ENCODE measurements at regions of chr5 and their contacts with region 1.

Region 1: DNA sequence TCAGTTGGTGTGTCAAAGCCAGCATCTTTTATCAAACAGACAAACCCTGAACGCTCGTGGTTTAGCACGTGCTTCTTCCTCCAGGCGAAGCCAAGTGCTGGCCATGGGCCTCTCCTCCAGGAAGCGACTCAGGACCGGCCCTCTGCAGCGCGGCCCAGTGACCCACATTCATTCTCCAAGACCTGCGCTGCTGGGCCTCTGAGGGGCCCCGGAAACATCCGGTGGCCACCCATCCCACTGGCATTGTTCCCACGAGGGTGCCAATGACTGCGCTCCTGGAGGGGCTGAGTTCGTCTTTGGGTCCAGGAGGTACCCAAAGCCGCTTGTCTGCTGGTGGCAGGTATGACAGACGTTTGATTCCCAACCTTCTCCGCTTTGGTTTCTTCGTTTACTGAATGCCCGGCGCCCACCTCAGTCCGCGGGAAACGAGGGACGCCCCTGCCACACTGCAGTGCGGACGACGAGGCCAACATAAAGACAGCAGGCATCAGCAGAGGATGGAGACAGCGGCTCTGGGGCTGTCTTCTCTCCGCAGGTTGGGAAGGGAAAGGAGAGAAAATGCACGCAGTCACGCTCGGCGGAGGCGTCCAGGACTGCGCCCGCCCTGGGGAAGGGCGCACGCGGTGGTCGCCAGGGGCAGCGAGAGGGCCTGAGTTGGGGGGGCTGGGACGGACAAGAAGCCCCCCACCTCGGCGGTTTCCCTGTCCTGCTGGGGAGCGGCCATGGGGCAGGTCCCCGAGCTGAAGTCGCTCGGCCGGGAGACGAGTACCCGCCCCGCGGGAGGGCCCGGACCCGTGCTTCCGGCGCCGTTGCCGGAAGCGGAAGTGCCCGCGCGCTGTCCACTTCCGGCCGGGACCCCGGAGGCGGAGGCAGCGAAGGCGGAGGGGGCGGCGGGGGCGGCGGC is at the start of gene EXOC3:
- DNase-seq: peak; percentile 47 to 89 (median 70)
- ATAC-seq: peak; percentile 77
- H3K4me3 ChIP-seq: peak within 1 kb of the TSS; percentile 98
- H3K4me3 Mint-ChIP-seq: peak within 1 kb of the TSS; percentile 96
- H3K27ac ChIP-seq: peak within 1 kb of the TSS; percentile 70 to 79
- H3K27ac Mint-ChIP-seq: peak within 1 kb of the TSS; percentile 93
- H3K4me1 ChIP-seq: peaks cover 28% of the 10 kb centered on the region
- H3K4me1 Mint-ChIP-seq: peaks cover 37% of the 10 kb centered on the region
- H3K27me3 ChIP-seq: no peaks in the 10 kb centered on the region
- H3K27me3 Mint-ChIP-seq: no peaks in the 10 kb centered on the region
- CTCF ChIP-seq: no peak
- total RNA-seq, gene EXOC3: 82.4 to 84.1 TPM

Region 2: GRCh38 chr5:217860-218456 is 224.6 kb before region 1 on chr5 and contains the starts of genes CCDC127 and SDHA:
- CTCF ChIA-PET with region 1: no interaction called
- POLR2A ChIA-PET with region 1: no interaction called
- intact Hi-C with region 1: loop called in 1 of 2 experiments (anchors 10 kb)
- DNase-seq: peak; percentile 95 to 100 (median 98)
- ATAC-seq: peak; percentile 81
- H3K4me3 ChIP-seq: peak within 1 kb of the TSS; percentile 93
- H3K4me3 Mint-ChIP-seq: peak within 1 kb of the TSS; percentile 99
- H3K27ac ChIP-seq: peak within 1 kb of the TSS; percentile 57 to 80
- H3K27ac Mint-ChIP-seq: peak within 1 kb of the TSS; percentile 96
- H3K4me1 ChIP-seq: peaks cover 46% of the 10 kb centered on the region
- H3K4me1 Mint-ChIP-seq: peaks cover 68% of the 10 kb centered on the region
- H3K27me3 ChIP-seq: no peaks in the 10 kb centered on the region
- H3K27me3 Mint-ChIP-seq: no peaks in the 10 kb centered on the region
- CTCF ChIP-seq: peak; percentile 30
- total RNA-seq, gene CCDC127: 1.9 to 2.8 TPM
- total RNA-seq, gene SDHA: 244 to 245 TPM

Region 3: GRCh38 chr5:270340-270739 is 172.2 kb before region 1 on chr5:
- CTCF ChIA-PET with region 1: no interaction called
- POLR2A ChIA-PET with region 1: interaction called, 3 read pairs
- intact Hi-C with region 1: loop called in 1 of 2 experiments (anchors 5 kb)
- DNase-seq: peak in 1 of 14 experiments; percentile 32
- ATAC-seq: no peak
- H3K4me3 ChIP-seq: peak overlapping the region; percentile 78
- H3K4me3 Mint-ChIP-seq: peak overlapping the region; percentile 82
- H3K27ac ChIP-seq: no peak overlapping the region
- H3K27ac Mint-ChIP-seq: peak overlapping the region; percentile 87
- H3K4me1 ChIP-seq: peaks cover 22% of the 10 kb centered on the region
- H3K4me1 Mint-ChIP-seq: peaks cover 37% of the 10 kb centered on the region
- H3K27me3 ChIP-seq: no peaks in the 10 kb centered on the region
- H3K27me3 Mint-ChIP-seq: no peaks in the 10 kb centered on the region
- CTCF ChIP-seq: no peak

Region 4: DNA sequence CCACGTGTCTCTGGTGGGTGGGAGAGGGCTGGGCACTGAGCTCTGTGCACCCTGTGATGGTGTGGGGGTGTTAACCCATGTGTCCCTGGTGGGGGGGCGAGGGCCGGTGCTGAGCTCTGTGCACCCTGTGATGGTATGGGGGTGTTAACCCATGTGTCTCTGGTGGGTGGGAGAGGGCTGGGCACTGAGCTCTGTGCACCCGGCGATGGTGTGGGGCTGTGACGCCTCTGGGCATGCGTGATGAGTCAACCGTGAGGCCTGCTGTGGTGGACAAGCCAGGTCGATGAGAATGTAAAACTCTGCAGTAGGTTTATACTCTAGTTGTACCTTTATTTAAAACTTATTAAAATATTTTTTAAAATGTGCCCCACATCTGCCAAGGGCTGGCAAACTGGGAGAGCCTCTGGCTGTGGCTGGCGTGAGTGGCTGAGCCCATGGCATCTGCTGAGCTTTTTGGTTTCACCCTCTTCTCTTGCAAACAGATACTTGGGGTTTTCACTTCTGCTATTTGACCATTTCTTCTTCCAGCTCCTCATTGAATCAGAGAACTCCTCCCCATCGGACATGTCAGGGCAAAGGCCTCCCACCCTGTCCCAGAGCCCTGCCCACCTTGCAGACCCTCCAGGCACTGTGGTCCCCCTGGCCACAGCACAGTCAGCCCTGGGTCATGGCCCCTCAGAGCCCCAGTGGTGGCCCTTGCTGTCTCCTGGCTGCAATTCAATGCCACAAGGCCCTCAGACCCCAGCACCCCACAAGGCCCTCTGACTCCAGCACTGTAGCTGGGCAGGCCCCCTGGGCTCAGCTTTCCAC is 18.1 kb before region 1 on chr5:
- CTCF ChIA-PET with region 1: no interaction called
- POLR2A ChIA-PET with region 1: no interaction called
- intact Hi-C with region 1: no loop called
- DNase-seq: no peak
- ATAC-seq: no peak
- H3K4me3 ChIP-seq: no peak overlapping the region
- H3K4me3 Mint-ChIP-seq: no peak overlapping the region
- H3K27ac ChIP-seq: no peak overlapping the region
- H3K27ac Mint-ChIP-seq: no peak overlapping the region
- H3K4me1 ChIP-seq: no peaks in the 10 kb centered on the region
- H3K4me1 Mint-ChIP-seq: no peaks in the 10 kb centered on the region
- H3K27me3 ChIP-seq: no peaks in the 10 kb centered on the region
- H3K27me3 Mint-ChIP-seq: no peaks in the 10 kb centered on the region
- CTCF ChIP-seq: no peak

Region 5: GRCh38 chr5:472656-473553 is 30.3 kb after region 1 on chr5:
- CTCF ChIA-PET with region 1: interaction called, 4 read pairs
- POLR2A ChIA-PET with region 1: interaction called, 17 read pairs
- intact Hi-C with region 1: loop called in 1 of 2 experiments (anchors 1 kb)
- DNase-seq: peak; percentile 76 to 95 (median 86)
- ATAC-seq: peak; percentile 84
- H3K4me3 ChIP-seq: peak overlapping the region; percentile 75
- H3K4me3 Mint-ChIP-seq: peak overlapping the region; percentile 87
- H3K27ac ChIP-seq: peak overlapping the region in 1 of 2 donors; percentile 74
- H3K27ac Mint-ChIP-seq: peak overlapping the region; percentile 87
- H3K4me1 ChIP-seq: peaks cover 42% of the 10 kb centered on the region
- H3K4me1 Mint-ChIP-seq: peaks cover 27% of the 10 kb centered on the region
- H3K27me3 ChIP-seq: peaks cover 14 to 16% of the 10 kb centered on the region in 2 experiments
- H3K27me3 Mint-ChIP-seq: peaks cover 20% of the 10 kb centered on the region
- CTCF ChIP-seq: no peak

Region 6: GRCh38 chr5:493119-493701 is 50.6 kb after region 1 on chr5:
- CTCF ChIA-PET with region 1: no interaction called
- POLR2A ChIA-PET with region 1: no interaction called
- intact Hi-C with region 1: no loop called
- DNase-seq: no peak
- ATAC-seq: no peak
- H3K4me3 ChIP-seq: no peak overlapping the region
- H3K4me3 Mint-ChIP-seq: no peak overlapping the region
- H3K27ac ChIP-seq: no peak overlapping the region
- H3K27ac Mint-ChIP-seq: no peak overlapping the region
- H3K4me1 ChIP-seq: no peaks in the 10 kb centered on the region
- H3K4me1 Mint-ChIP-seq: no peaks in the 10 kb centered on the region
- H3K27me3 ChIP-seq: no peaks in the 10 kb centered on the region
- H3K27me3 Mint-ChIP-seq: no peaks in the 10 kb centered on the region
- CTCF ChIP-seq: no peak

Region 7: DNA sequence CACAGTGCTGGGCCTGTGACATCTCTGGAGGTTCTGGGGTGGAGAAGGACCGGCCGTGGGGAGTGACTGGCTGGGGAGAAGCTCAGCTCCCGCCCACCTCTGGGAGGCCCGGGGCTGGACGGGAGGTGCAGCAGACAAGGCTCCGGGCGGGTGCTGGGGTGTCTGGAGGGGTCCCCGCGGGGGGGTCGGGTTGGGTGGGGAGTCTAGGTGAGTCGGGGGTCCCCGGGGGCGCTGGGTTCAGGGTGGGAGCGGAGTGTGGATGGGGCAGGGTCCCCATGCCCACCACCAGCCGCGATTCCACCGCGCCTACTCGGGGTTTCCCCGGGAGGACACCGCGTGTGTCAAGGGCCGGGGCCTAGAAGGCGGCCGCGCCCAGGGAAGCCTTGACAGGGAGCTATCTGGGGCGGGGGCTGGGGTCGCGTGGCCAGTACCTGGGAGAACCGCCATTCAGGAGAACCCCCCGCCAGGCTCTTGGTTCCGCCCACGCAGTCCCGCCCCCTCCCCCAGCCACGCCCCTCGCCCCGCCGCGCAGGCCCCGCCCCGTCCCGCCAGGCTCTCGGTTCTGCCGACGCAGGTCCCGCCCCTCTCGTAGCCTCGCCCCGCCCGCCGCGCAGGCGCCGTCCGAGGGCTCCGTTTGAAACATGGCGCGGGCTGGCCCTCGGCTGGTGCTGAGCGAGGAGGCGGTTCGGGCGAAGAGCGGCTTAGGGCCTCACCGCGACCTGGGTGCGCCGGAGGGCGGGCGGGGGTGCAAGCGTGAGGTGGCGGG is 169.3 kb after region 1 on chr5 and contains the start of gene CEP72:
- CTCF ChIA-PET with region 1: no interaction called
- POLR2A ChIA-PET with region 1: interaction called, 3 read pairs
- intact Hi-C with region 1: loop called (anchors 5 to 10 kb)
- DNase-seq: peak; percentile 89 to 97 (median 93)
- ATAC-seq: peak; percentile 95
- H3K4me3 ChIP-seq: peak within 1 kb of the TSS; percentile 90
- H3K4me3 Mint-ChIP-seq: peak within 1 kb of the TSS; percentile 92
- H3K27ac ChIP-seq: no peak within 1 kb of the TSS
- H3K27ac Mint-ChIP-seq: peak within 1 kb of the TSS; percentile 68
- H3K4me1 ChIP-seq: peaks cover 30% of the 10 kb centered on the region
- H3K4me1 Mint-ChIP-seq: peaks cover 53% of the 10 kb centered on the region
- H3K27me3 ChIP-seq: no peaks in the 10 kb centered on the region
- H3K27me3 Mint-ChIP-seq: peaks cover 11% of the 10 kb centered on the region
- CTCF ChIP-seq: no peak
- total RNA-seq, gene CEP72: 7.6 to 8.0 TPM

Region 8: GRCh38 chr5:892394-893136 is 450.0 kb after region 1 on chr5 and contains the starts of genes BRD9 and TRIP13:
- CTCF ChIA-PET with region 1: no interaction called
- POLR2A ChIA-PET with region 1: no interaction called
- intact Hi-C with region 1: loop called in 1 of 2 experiments (anchors 5 kb)
- DNase-seq: peak; percentile 69 to 93 (median 80)
- ATAC-seq: peak; percentile 95
- H3K4me3 ChIP-seq: peak within 1 kb of the TSS; percentile 95
- H3K4me3 Mint-ChIP-seq: peak within 1 kb of the TSS; percentile 92
- H3K27ac ChIP-seq: peak within 1 kb of the TSS; percentile 48 to 67
- H3K27ac Mint-ChIP-seq: peak within 1 kb of the TSS; percentile 90
- H3K4me1 ChIP-seq: peaks cover 30% of the 10 kb centered on the region
- H3K4me1 Mint-ChIP-seq: peaks cover 25% of the 10 kb centered on the region
- H3K27me3 ChIP-seq: no peaks in the 10 kb centered on the region
- H3K27me3 Mint-ChIP-seq: no peaks in the 10 kb centered on the region
- CTCF ChIP-seq: no peak
- total RNA-seq, gene BRD9: 109 TPM
- total RNA-seq, gene TRIP13: 0.47 to 0.66 TPM

Region 9: GRCh38 chr5:1035421-1036405 is 593.1 kb after region 1 on chr5:
- CTCF ChIA-PET with region 1: no interaction called
- POLR2A ChIA-PET with region 1: no interaction called
- intact Hi-C with region 1: no loop called
- DNase-seq: peak in 1 of 14 experiments; percentile 4
- ATAC-seq: no peak
- H3K4me3 ChIP-seq: no peak overlapping the region
- H3K4me3 Mint-ChIP-seq: no peak overlapping the region
- H3K27ac ChIP-seq: no peak overlapping the region
- H3K27ac Mint-ChIP-seq: no peak overlapping the region
- H3K4me1 ChIP-seq: no peaks in the 10 kb centered on the region
- H3K4me1 Mint-ChIP-seq: no peaks in the 10 kb centered on the region
- H3K27me3 ChIP-seq: no peaks in the 10 kb centered on the region
- H3K27me3 Mint-ChIP-seq: no peaks in the 10 kb centered on the region
- CTCF ChIP-seq: no peak